ENCODE measurements at regions of chr19 and their contacts with region 1.

Region 1: DNA sequence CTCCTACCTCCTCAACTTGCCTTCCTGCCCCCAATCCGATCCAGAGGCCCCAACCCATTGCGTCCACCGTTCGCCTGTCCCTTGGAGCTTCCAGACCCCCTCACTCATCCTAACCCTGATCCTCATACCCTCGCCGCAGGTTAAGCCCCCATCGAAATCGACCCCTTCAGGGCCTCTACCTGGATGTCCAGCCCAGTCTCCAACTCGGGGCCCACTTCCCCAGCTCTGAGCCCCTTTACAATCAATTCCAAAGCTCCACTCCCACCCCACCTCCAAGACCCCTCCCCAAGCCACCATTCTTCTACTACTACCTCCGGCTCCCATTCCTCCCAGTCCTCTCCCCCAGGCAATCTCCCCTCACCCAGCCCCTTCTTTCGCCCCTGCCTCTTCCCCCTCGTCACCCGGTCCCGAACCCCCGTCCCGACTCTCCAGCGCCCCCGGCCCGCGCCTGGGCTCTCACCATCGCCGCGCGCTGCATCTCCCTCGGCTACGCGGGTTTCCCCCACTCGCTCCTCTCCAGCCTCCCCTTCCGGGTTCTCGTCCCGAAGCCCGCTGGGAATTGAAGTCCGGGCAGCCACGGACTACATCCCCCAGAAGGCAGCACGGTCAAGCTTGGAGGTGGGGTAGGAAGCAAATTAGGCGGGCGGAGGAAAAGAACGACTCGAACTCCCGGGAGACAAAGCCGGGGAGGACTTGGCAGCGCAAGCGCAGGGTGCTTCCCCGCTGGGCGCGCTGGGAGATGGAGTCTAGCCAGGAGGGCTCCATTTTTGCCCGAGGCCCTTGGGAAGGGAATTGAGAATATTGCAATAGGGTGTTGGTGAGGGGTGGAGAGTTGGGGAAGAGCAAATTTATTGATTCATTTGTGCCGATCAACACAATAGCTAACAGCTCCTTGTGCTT is at the start of gene FBXO46:
- DNase-seq: peak; percentile 86
- ATAC-seq: peak; percentile 98
- H3K4me3 Mint-ChIP-seq: peak within 1 kb of the TSS; percentile 95
- H3K27ac Mint-ChIP-seq: peak within 1 kb of the TSS; percentile 93
- H3K4me1 Mint-ChIP-seq: peaks cover 25% of the 10 kb centered on the region
- H3K27me3 Mint-ChIP-seq: no peaks in the 10 kb centered on the region
- CTCF ChIP-seq: no peak
- total RNA-seq, gene FBXO46: 36.3 and 44.0 TPM in 2 replicates

Region 2: GRCh38 chr19:45657520-45658167 is 73.0 kb before region 1 on chr19:
- CTCF ChIA-PET with region 1: no interaction called
- POLR2A ChIA-PET with region 1: no interaction called
- intact Hi-C with region 1: no loop called
- DNase-seq: no peak
- ATAC-seq: no peak
- H3K4me3 Mint-ChIP-seq: no peak overlapping the region
- H3K27ac Mint-ChIP-seq: no peak overlapping the region
- H3K4me1 Mint-ChIP-seq: no peaks in the 10 kb centered on the region
- H3K27me3 Mint-ChIP-seq: peaks cover 12% of the 10 kb centered on the region
- CTCF ChIP-seq: no peak

Region 3: GRCh38 chr19:45705115-45705514 is 25.5 kb before region 1 on chr19:
- CTCF ChIA-PET with region 1: no interaction called
- POLR2A ChIA-PET with region 1: interaction called, 25 read pairs
- intact Hi-C with region 1: no loop called
- DNase-seq: no peak
- ATAC-seq: no peak
- H3K4me3 Mint-ChIP-seq: no peak overlapping the region
- H3K27ac Mint-ChIP-seq: no peak overlapping the region
- H3K4me1 Mint-ChIP-seq: peaks cover 31% of the 10 kb centered on the region
- H3K27me3 Mint-ChIP-seq: no peaks in the 10 kb centered on the region
- CTCF ChIP-seq: no peak

Region 4: GRCh38 chr19:45753546-45753945 is 22.9 kb after region 1 on chr19:
- CTCF ChIA-PET with region 1: no interaction called
- POLR2A ChIA-PET with region 1: no interaction called
- intact Hi-C with region 1: no loop called
- DNase-seq: no peak
- ATAC-seq: no peak
- H3K4me3 Mint-ChIP-seq: no peak overlapping the region
- H3K27ac Mint-ChIP-seq: no peak overlapping the region
- H3K4me1 Mint-ChIP-seq: no peaks in the 10 kb centered on the region
- H3K27me3 Mint-ChIP-seq: peaks cover 2% of the 10 kb centered on the region
- CTCF ChIP-seq: no peak

Region 5: GRCh38 chr19:45779231-45780145 is 48.8 kb after region 1 on chr19:
- CTCF ChIA-PET with region 1: no interaction called
- POLR2A ChIA-PET with region 1: no interaction called
- intact Hi-C with region 1: loop called (anchors 2 kb)
- DNase-seq: peak; percentile 84
- ATAC-seq: peak; percentile 96
- H3K4me3 Mint-ChIP-seq: peak overlapping the region; percentile 82
- H3K27ac Mint-ChIP-seq: peak overlapping the region; percentile 9
- H3K4me1 Mint-ChIP-seq: peaks cover 26% of the 10 kb centered on the region
- H3K27me3 Mint-ChIP-seq: peaks cover 4% of the 10 kb centered on the region
- CTCF ChIP-seq: no peak

Region 6: DNA sequence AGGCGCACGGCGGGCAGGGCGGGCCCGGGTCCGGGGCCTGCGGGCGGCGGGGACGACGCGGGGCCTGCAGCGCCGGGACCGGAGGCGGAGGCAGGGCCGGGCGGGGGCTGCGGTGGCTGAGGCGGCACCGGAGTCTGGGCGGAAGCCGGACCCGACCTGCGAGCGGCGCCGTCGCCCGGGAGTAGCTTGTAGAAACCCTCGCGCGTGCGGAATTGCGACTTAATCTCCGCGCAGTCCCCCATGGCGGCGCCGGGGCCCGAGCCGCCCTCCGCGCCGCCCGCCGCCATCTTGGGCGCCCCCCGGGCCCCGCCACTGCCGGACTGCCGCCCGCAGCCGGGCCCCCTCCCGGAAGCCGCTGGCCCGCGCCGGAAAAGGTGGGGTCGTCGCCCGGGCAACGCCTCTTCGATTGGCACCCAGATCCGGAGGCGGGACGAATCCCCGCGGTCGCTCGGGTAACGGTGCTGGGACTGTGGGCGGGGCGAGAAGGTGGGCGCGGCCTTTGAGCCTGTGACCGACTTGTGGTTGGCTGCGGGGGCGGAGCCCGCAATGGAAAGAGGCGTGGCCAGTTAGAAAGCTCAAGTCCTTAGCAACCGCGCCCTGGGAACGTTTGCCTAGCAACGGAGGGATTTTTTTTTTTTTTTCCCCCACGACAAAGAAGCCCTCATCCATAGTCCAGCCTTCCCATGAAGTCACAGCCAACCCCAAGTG is 62.0 kb after region 1 on chr19 and contains the start of gene DMWD:
- CTCF ChIA-PET with region 1: no interaction called
- POLR2A ChIA-PET with region 1: interaction called, 8 read pairs
- intact Hi-C with region 1: loop called (anchors 2 kb)
- DNase-seq: peak; percentile 100
- ATAC-seq: peak; percentile 96
- H3K4me3 Mint-ChIP-seq: peak within 1 kb of the TSS; percentile 88
- H3K27ac Mint-ChIP-seq: peak within 1 kb of the TSS; percentile 76
- H3K4me1 Mint-ChIP-seq: peaks cover 27% of the 10 kb centered on the region
- H3K27me3 Mint-ChIP-seq: peaks cover 5% of the 10 kb centered on the region
- CTCF ChIP-seq: no peak
- total RNA-seq, gene DMWD: 64.7 and 77.3 TPM in 2 replicates